ENCODE measurements at regions of chr12 and their contacts with region 1.

Region 1: GRCh38 chr12:48542300-48542928 is 17.0 kb downstream of the OR8S1 start:
- DNase-seq: peak in 1 of 3 donors; percentile 13
- ATAC-seq: no peak
- H3K4me3 ChIP-seq: no peak overlapping the region
- H3K27ac ChIP-seq: no peak overlapping the region
- H3K4me1 ChIP-seq: no peaks in the 10 kb centered on the region
- H3K27me3 ChIP-seq: no peaks in the 10 kb centered on the region

Region 2: DNA sequence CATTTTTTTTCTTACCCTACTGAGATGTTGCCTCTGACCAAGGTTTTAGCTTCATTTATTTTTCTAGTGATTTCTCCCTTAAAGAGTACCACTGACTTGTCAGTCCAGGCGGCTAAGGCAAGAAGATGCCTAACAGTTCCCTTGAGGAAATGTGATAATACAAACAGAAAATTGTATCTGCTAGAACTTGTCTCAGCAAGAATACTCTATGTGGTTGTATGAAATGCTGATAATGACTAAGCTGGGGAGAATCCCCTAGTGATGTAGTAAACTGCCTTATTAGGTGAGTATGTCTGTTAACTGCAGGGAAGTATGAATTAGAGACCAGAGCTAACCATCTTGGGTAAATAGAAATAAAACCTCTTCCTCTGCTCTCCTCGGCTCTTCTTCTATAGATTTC is 53.4 kb before region 1 on chr12:
- intact Hi-C with region 1: no loop called
- DNase-seq: no peak
- ATAC-seq: no peak
- H3K4me3 ChIP-seq: no peak overlapping the region
- H3K27ac ChIP-seq: no peak overlapping the region
- H3K4me1 ChIP-seq: no peaks in the 10 kb centered on the region
- H3K27me3 ChIP-seq: no peaks in the 10 kb centered on the region

Region 3: DNA sequence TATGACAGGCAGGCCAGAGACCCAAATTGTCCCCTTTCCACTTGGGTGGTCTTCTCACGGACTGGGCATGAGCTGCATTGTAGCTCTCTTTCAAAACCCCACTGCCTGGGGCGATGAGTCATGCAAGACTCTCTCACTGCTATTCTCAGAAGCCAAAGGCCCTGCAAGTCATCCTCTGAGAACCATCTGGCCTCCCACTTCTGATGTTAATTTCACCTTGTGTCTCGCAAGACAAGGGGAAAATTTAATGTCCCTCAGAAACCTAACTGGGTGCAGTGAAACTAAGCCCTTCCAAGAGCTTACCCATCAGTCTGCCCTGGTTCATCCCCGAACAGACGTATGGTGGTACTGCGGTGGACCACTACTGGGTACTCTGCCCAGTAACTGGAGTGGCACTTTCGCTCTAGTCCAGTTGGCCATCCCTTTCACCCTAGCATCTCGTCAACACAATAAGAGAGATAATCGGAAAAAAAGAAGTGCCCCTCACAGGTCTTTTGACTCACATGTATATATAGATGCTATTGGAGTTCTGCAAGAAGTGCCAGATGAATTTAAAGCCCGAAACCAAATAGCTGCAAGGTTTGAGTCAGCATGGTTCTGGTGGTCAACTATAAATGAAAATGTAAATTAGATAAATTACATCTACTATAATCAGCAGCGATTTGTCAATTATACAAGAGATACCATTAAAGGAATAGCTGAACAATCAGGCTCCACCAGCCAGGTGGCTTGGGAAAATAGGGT is 58.8 kb after region 1 on chr12:
- intact Hi-C with region 1: loop called in 1 of 4 experiments (anchors 10 kb)
- DNase-seq: no peak
- ATAC-seq: no peak
- H3K4me3 ChIP-seq: no peak overlapping the region
- H3K27ac ChIP-seq: no peak overlapping the region
- H3K4me1 ChIP-seq: no peaks in the 10 kb centered on the region
- H3K27me3 ChIP-seq: no peaks in the 10 kb centered on the region

Measured in right cardiac atrium (tissue), 5 donors.